Common myeloid progenitor, CD34-positive (primary cell): ENCODE measurements at regions of chr3 and their contacts with region 1.

Region 1: GRCh38 chr3:46960081-46960701 is 16.4 kb downstream of the CCDC12 start:
- DNase-seq: no peak
- H3K4me3 ChIP-seq: no peak overlapping the region
- H3K27ac ChIP-seq: peak overlapping the region in 1 of 2 experiments; percentile 0
- H3K4me1 ChIP-seq: peaks cover 17 to 61% (median 50%) of the 10 kb centered on the region in 4 experiments
- H3K27me3 ChIP-seq: no peaks in the 10 kb centered on the region

Region 2: GRCh38 chr3:46935168-46935858 is 24.9 kb before region 1 on chr3:
- CTCF ChIA-PET with region 1: interaction called, 10 read pairs
- POLR2A ChIA-PET with region 1: no interaction called
- DNase-seq: peak in 1 of 3 donors; percentile 34
- H3K4me3 ChIP-seq: no peak overlapping the region
- H3K27ac ChIP-seq: peak overlapping the region in 1 of 2 experiments; percentile 15
- H3K4me1 ChIP-seq: peaks cover 27 to 80% (median 53%) of the 10 kb centered on the region in 4 experiments
- H3K27me3 ChIP-seq: no peaks in the 10 kb centered on the region

Region 3: GRCh38 chr3:46947981-46948791 is 12.0 kb before region 1 on chr3:
- CTCF ChIA-PET with region 1: interaction called, 20 read pairs
- POLR2A ChIA-PET with region 1: no interaction called
- DNase-seq: peak in 2 of 3 donors; percentile 63 to 72
- H3K4me3 ChIP-seq: peak overlapping the region in 2 of 7 experiments; percentile 26 to 31
- H3K27ac ChIP-seq: peak overlapping the region in 1 of 2 experiments; percentile 68
- H3K4me1 ChIP-seq: peaks cover 21 to 61% (median 55%) of the 10 kb centered on the region in 4 experiments
- H3K27me3 ChIP-seq: no peaks in the 10 kb centered on the region

Region 4: DNA sequence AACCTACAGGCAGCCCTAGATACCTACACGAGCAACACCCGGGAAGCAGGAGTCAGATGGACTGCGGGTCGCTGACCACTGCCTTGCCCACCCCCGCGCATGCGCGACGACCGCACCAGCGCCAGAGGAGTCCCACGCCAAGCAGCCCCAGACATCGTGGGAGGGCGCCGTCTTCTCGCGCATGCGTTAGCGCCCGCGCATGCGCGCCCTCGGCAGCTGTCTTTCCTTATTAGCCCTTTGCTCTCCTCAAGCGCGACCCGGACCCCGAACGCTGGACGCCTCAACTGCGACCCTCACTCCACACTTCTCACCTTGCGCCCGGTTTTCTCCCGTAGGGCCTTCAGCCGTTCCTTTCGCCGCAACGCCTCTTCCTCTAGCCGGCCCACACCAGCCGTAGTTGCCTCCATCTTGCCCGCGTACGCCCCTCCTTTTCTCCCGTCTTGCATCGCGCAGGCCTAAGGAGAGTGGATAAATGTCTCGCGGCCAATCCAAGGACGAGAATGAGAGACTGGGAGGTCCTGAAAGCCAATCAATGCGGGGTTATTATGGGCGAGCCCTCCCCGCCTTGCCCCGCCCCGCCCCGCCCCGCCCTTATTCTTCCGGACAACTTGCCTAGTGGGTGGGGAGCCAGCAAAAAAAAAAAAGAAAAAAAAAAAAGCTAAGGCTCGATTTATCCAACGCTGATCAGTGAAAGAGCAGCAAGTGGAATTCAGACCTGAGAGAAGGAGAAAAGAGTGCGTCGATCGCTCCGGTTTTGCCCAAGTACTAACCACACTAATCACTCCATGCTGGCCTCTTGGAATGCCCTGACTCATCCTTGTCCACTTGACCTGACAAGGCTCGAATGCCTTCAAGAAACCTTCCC is 16.4 kb after region 1 on chr3 and contains the start of gene CCDC12:
- CTCF ChIA-PET with region 1: interaction called, 4 read pairs
- POLR2A ChIA-PET with region 1: interaction called, 10 read pairs
- DNase-seq: peak; percentile 99
- H3K4me3 ChIP-seq: peak within 1 kb of the TSS; percentile 83 to 96 (median 91)
- H3K27ac ChIP-seq: peak within 1 kb of the TSS; percentile 84 to 94
- H3K4me1 ChIP-seq: peaks cover 28 to 76% (median 73%) of the 10 kb centered on the region in 4 experiments
- H3K27me3 ChIP-seq: no peaks in the 10 kb centered on the region

Region 5: DNA sequence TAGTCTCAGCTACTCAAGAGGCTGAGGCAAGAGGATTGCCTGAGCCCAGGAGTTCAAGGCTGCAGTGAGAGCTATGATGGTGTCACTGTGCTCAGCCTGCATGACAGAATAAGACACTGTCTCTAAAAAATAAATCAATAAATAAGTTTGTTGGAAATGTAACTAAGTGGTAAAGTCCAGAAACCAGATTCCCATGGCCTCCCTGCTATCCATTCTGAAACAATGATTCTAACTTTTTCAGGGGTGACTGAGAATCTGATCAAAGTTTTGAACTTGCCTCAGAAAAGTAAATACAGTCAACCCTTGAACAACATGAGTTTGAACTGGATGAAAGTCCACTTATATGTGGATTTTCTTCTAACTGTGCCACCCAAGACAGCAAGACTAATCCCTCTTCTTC is 105.5 kb after region 1 on chr3:
- CTCF ChIA-PET with region 1: no interaction called
- POLR2A ChIA-PET with region 1: no interaction called
- DNase-seq: no peak
- H3K4me3 ChIP-seq: no peak overlapping the region
- H3K27ac ChIP-seq: no peak overlapping the region
- H3K4me1 ChIP-seq: no peaks in the 10 kb centered on the region
- H3K27me3 ChIP-seq: no peaks in the 10 kb centered on the region